AG04449 (cell line): ENCODE measurements at regions of chr12 and their contacts with region 1.

Region 1: GRCh38 chr12:55760663-55761062 is 17.7 kb downstream of the GDF11 start:
- DNase-seq: no peak
- H3K4me3 ChIP-seq: no peak overlapping the region
- CTCF ChIP-seq: no peak

Region 2: DNA sequence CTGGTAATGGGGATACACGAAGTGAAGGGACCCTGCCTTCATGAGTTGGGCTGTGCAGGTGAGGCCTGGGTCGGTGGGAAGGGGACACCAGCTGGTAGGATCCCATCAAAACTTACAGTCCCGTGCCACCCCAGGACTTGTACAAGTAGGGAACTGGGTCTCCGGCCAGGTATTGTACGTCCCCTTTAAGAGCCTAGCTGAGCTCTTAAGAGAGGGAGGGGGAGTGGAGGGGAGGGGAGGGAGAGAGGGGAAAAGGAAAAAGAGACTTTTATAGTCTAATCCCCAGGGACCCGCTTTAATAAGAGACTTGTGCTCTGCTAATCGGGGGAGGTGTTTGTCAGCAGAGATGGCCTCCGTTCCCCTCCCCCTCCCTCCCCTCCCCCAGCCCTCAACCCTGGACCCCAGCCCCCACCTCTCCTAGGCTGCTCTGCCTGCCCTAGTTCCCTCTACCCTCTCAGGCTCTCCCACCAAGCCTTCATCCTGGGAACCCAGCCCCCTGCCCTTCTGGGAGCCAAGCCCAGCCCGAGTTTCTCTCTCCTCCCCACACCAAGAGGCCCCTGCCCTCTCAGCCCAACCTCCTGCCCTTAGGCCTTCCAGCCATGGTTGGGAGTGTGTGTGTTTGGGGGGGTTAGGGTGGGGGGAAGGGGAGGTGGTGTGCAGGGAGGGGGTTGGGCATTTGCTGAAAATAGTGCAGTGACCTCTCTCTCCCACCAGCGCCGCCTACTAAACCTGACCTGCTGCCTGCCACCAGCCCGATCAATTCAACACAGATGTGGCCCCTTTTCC is 15.1 kb before region 1 on chr12:
- CTCF ChIA-PET with region 1: interaction called, 42 read pairs
- POLR2A ChIA-PET with region 1: interaction called, 5 read pairs
- DNase-seq: no peak
- H3K4me3 ChIP-seq: peak overlapping the region; percentile 43
- CTCF ChIP-seq: no peak